ENCODE measurements at regions of chr2 and their contacts with region 1.

Region 1: GRCh38 chr2:95345566-95346230 is 48.6 kb downstream of the KCNIP3 start:
- DNase-seq: peak; percentile 29
- H3K4me3 ChIP-seq: peak overlapping the region; percentile 65
- H3K27me3 ChIP-seq: peaks cover 1% of the 10 kb centered on the region
- CTCF ChIP-seq: peak; percentile 79

Region 2: GRCh38 chr2:95314964-95315611 is 30.6 kb before region 1 on chr2:
- CTCF ChIA-PET with region 1: interaction called, 14 read pairs
- POLR2A ChIA-PET with region 1: no interaction called
- DNase-seq: no peak
- H3K4me3 ChIP-seq: no peak overlapping the region
- H3K27me3 ChIP-seq: no peaks in the 10 kb centered on the region; the same call in 1 of the 2 replicates
- CTCF ChIP-seq: peak; percentile 76

Region 3: GRCh38 chr2:95328358-95329125 is 17.2 kb before region 1 on chr2:
- CTCF ChIA-PET with region 1: interaction called, 31 read pairs
- POLR2A ChIA-PET with region 1: interaction called, 4 read pairs
- DNase-seq: no peak
- H3K4me3 ChIP-seq: no peak overlapping the region
- H3K27me3 ChIP-seq: no peaks in the 10 kb centered on the region
- CTCF ChIP-seq: no peak

Region 4: GRCh38 chr2:95333888-95334338 is 11.8 kb before region 1 on chr2:
- CTCF ChIA-PET with region 1: interaction called, 31 read pairs
- POLR2A ChIA-PET with region 1: no interaction called
- DNase-seq: peak; percentile 97
- H3K4me3 ChIP-seq: no peak overlapping the region
- H3K27me3 ChIP-seq: no peaks in the 10 kb centered on the region
- CTCF ChIP-seq: no peak

Region 5: GRCh38 chr2:95359031-95359430 is 13.3 kb after region 1 on chr2:
- CTCF ChIA-PET with region 1: interaction called, 23 read pairs
- POLR2A ChIA-PET with region 1: no interaction called
- DNase-seq: peak; percentile 33
- H3K4me3 ChIP-seq: no peak overlapping the region
- H3K27me3 ChIP-seq: no peaks in the 10 kb centered on the region
- CTCF ChIP-seq: no peak

Region 6: GRCh38 chr2:95374921-95375471 is 29.3 kb after region 1 on chr2:
- CTCF ChIA-PET with region 1: no interaction called
- POLR2A ChIA-PET with region 1: no interaction called
- DNase-seq: no peak
- H3K4me3 ChIP-seq: no peak overlapping the region
- H3K27me3 ChIP-seq: no peaks in the 10 kb centered on the region
- CTCF ChIP-seq: no peak

Region 7: DNA sequence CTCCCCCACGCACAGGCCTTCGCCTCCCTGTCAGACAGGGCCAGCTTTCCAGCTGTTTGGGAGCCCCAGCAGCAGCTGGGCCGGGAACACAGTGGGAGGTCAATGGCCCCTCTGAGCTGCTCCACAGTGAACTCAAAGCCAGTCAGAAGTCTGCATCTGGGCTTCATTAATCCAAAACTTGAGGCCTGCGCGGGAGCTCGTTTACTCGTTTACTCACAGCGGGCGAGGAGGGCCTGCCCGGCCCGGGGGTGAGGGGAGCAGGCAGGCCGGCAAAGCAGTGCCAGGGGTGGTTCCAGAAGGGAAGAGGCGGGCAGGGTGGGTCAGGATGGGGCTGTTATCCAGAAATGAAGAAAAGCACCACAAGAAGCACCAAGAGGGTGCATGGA is 1561.0 kb after region 1 on chr2:
- CTCF ChIA-PET with region 1: no interaction called
- POLR2A ChIA-PET with region 1: no interaction called
- DNase-seq: no peak
- H3K4me3 ChIP-seq: no peak overlapping the region
- H3K27me3 ChIP-seq: no peaks in the 10 kb centered on the region; the same call in 1 of the 2 replicates
- CTCF ChIP-seq: no peak